WTC11 (cell line): ENCODE measurements at regions of chr13 and their contacts with region 1.

Region 1: GRCh38 chr13:52968074-52968700 is 60.4 kb upstream of the OLFM4 start:
- DNase-seq: peak; percentile 92
- ATAC-seq: peak; percentile 100
- H3K4me3 Mint-ChIP-seq: no peak overlapping the region
- H3K27ac Mint-ChIP-seq: no peak overlapping the region
- H3K4me1 Mint-ChIP-seq: no peaks in the 10 kb centered on the region; the same call in 1 of the 2 replicates
- H3K27me3 Mint-ChIP-seq: peaks cover 4% of the 10 kb centered on the region; the same call in 1 of the 2 replicates
- CTCF ChIP-seq: peak; percentile 84

Region 2: GRCh38 chr13:52862358-52863206 is 105.6 kb before region 1 on chr13:
- CTCF ChIA-PET with region 1: interaction called, 70 read pairs
- POLR2A ChIA-PET with region 1: no interaction called
- DNase-seq: peak; percentile 74
- ATAC-seq: peak; percentile 85
- H3K4me3 Mint-ChIP-seq: no peak overlapping the region
- H3K27ac Mint-ChIP-seq: no peak overlapping the region
- H3K4me1 Mint-ChIP-seq: peaks cover 18% of the 10 kb centered on the region
- H3K27me3 Mint-ChIP-seq: peaks cover 48% of the 10 kb centered on the region
- CTCF ChIP-seq: peak; percentile 80

Region 3: DNA sequence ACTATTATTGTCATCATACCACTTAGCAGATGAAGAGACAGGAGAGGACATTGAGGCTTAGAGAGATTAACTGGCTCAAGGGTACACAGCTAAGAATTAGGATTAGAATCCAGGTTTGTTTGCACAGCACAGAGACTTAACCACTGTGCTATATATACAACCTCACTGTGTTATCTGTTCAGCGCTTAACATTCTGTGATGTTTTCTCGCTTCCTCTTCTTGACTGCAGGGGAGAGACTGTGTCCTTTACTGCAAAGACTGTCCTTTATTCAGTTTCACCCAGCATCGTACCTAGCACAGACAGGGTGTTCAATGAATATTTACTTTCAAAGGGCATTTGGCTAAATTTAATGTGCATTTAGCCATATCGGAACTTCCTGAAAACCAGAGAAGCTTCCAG is 64.9 kb before region 1 on chr13:
- CTCF ChIA-PET with region 1: interaction called, 80 read pairs
- POLR2A ChIA-PET with region 1: interaction called, 3 read pairs
- DNase-seq: no peak
- ATAC-seq: no peak
- H3K4me3 Mint-ChIP-seq: no peak overlapping the region
- H3K27ac Mint-ChIP-seq: no peak overlapping the region
- H3K4me1 Mint-ChIP-seq: peaks cover 86% of the 10 kb centered on the region
- H3K27me3 Mint-ChIP-seq: peaks cover 37% of the 10 kb centered on the region
- CTCF ChIP-seq: no peak

Region 4: DNA sequence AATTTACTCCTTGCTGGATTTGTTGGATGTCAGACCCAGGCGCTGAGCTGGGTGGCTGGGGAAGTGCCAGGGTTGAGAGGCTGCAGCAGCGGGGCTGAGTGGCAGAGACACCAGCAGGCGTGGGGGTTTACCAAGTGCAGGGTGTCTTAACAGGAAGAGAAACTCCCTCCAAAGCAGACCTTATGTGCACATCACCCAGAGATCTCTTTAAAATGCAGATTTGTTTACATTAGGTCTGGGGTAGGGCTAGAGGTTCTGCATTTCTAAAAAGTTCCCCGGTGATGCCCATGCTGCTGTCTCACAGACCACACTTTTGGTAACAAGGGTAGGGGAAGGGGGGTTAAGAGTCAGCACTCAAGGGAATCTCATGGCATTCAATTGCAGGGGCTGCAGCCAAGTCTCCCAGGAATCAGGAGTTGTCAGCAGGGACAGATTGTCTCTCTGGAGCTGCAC is 20.2 kb before region 1 on chr13:
- CTCF ChIA-PET with region 1: interaction called, 109 read pairs
- POLR2A ChIA-PET with region 1: no interaction called
- DNase-seq: no peak
- ATAC-seq: peak; percentile 67
- H3K4me3 Mint-ChIP-seq: no peak overlapping the region
- H3K27ac Mint-ChIP-seq: no peak overlapping the region
- H3K4me1 Mint-ChIP-seq: peaks cover 52% of the 10 kb centered on the region
- H3K27me3 Mint-ChIP-seq: peaks cover 58% of the 10 kb centered on the region
- CTCF ChIP-seq: no peak

Region 5: GRCh38 chr13:53004573-53004972 is 36.4 kb after region 1 on chr13:
- CTCF ChIA-PET with region 1: interaction called, 11 read pairs
- POLR2A ChIA-PET with region 1: interaction called, 3 read pairs
- DNase-seq: no peak
- ATAC-seq: 0 out of 2 replicates have a peak, but pooled peaks have one; percentile 39
- H3K4me3 Mint-ChIP-seq: no peak overlapping the region
- H3K27ac Mint-ChIP-seq: no peak overlapping the region
- H3K4me1 Mint-ChIP-seq: peaks cover 4% of the 10 kb centered on the region; the same call in 1 of the 2 replicates
- H3K27me3 Mint-ChIP-seq: 0 out of 2 replicates have a peak, but pooled peaks cover under 1% of the 10 kb centered on the region
- CTCF ChIP-seq: no peak

Region 6: GRCh38 chr13:53151336-53152056 is 183.3 kb after region 1 on chr13:
- CTCF ChIA-PET with region 1: interaction called, 125 read pairs
- POLR2A ChIA-PET with region 1: interaction called, 3 read pairs
- DNase-seq: peak; percentile 71
- ATAC-seq: peak; percentile 99
- H3K4me3 Mint-ChIP-seq: no peak overlapping the region
- H3K27ac Mint-ChIP-seq: no peak overlapping the region
- H3K4me1 Mint-ChIP-seq: no peaks in the 10 kb centered on the region; the same call in 1 of the 2 replicates
- H3K27me3 Mint-ChIP-seq: no peaks in the 10 kb centered on the region
- CTCF ChIP-seq: peak; percentile 86